ENCODE measurements at regions of chr5 and their contacts with region 1.

Region 1: DNA sequence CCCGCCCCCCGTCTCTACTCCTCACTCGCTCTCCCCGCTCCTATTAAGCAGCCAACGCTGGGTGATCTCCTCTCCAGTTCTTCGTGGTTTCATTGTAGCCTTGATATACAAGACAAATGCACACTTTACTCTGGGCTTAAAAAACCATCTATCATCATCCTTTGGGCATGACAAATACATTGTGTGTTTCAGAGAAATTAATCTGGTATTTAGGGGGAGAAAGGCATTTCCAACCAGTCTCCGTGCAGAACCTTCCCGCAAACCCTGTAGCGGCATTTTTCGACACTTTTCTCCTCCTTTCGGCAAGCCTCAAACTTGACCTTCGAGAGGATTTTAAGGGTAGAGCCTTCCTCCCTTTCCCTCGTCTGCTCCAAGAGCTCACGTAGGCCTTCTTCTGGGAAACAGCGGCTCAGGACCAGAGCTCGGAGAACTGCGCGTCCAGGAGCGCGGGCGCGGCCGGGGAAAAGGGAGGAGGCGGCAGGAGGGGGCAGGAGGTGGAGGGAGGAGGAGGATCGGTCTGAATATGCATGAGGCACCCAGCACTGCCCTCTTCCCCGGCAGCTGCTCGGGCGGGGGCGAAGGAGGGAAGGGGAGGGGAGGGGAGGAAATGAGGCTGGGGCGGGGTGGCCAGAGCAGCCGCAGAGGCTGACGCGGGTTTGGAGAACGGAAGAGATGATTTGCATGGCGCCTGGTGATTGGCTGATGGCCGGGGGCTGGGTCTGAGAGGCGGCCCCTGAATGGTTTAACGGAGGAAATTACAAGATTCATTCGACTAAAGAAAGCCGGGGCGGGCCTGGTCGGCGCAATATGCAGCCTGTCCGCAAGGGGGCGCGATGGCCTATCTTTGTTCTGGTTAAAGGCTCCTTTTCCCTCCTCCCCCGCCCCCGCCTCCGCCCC is 127.5 kb downstream of the TMEM161B start:
- DNase-seq: peak; percentile 96 to 98
- H3K4me3 ChIP-seq: peak overlapping the region; percentile 29
- H3K4me1 ChIP-seq: peaks cover 17% of the 10 kb centered on the region
- H3K27me3 ChIP-seq: no peaks in the 10 kb centered on the region

Region 2: DNA sequence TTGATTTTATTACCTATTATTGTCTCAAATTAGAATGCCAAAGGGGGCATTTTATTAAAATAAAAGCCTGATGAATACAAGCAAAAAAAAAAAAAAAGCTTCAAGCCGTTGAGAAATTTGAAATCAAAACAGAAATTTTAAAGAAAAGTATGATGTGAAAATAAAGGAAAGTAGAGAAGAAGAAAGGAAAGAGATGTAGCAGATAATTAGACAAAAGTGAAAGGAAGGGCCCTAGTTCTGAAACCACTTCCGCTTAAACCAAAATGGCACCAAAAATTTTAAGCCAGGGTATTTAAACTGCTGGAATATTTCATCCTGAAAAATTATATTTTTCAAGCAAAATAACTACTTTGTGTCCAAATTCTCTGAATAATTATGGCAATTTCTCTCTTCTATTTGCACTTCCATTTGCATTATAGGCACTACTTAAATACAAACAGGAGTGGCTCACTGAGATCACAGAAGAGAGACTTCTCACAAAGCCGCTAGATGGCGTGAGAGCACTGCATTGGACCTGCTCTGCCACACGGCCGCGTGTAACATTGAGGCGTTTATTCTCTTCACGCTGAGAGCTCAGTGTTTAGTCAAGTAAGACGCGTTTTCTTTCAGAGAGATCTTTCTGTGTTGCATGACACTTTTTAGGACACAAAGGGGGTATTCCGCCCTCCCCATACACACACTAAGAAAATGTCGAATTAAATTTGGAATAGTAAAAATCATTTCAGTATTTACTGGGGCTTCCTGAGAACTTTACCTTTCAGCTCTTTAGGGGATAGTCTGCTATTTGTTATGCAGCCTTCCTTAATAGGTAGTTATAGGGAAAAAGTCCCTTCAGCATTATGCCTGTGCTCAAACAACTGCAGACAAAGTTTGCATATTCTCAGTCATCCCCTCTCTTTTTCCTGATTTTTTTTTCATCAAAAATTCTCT is 360.0 kb before region 1 on chr5:
- in situ Hi-C with region 1: loop called (anchors 25 kb)
- DNase-seq: peak; percentile 89 to 90
- H3K4me3 ChIP-seq: no peak overlapping the region
- H3K4me1 ChIP-seq: peaks cover 12% of the 10 kb centered on the region
- H3K27me3 ChIP-seq: no peaks in the 10 kb centered on the region